ENCODE measurements at regions of chr9 and their contacts with region 1.

Region 1: DNA sequence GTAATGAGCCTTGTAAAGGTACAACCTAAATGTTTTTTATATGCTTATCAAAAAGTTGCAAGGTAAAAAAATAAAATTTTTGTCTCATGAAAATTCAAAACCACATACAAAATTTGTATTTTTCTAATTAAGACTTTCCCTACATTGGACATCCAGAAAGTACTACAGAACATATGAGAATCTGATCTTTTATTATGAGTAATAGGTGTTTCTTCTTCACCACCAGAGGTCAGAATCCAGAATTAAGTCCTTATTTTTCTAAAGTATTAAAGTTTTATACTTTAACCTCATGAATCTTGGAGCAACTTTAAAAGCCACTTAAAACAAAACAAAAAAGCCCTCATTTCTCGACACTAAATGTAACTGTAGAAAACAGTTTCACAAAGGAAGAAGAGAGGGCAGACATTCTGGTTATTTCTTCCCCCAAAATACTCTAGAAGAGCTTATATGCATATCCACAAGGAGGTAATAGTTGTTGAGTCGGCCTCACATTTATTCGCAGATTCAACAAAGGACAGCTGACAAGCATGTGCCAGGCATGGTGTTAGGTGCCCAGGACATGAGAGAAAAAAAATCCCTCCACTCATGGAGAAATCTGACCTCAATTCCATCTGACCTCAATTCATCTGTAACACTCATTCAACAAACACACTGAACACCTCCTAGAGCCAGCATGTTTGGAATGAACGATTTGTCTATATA is 69.3 kb downstream of the MLLT3 start:
- DNase-seq: no peak
- H3K4me3 Mint-ChIP-seq: peak overlapping the region; percentile 30
- H3K27ac Mint-ChIP-seq: peak overlapping the region; percentile 35
- H3K4me1 Mint-ChIP-seq: peaks cover 50% of the 10 kb centered on the region
- H3K27me3 Mint-ChIP-seq: no peaks in the 10 kb centered on the region
- CTCF ChIP-seq: no peak

Region 2: DNA sequence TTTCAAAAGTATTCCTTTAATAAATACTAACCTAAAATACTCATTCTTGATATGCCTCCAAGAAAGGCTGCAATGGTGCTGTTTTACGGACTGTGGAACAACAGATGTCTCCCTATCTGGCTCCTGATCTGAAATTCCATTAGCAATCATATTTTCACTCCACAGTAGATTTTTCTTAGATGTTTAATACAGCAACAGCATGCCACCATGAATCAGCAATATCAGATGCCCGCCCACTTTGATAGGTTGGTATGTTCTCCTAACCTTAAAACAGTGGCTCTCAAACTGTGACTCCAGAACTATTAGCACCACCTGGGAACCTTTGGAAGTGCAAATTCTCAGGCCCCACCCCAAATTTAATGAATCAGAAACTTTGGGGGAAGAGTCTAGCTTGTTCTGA is 40.9 kb before region 1 on chr9:
- CTCF ChIA-PET with region 1: no interaction called
- intact Hi-C with region 1: loop called (anchors 5 kb)
- DNase-seq: no peak
- H3K4me3 Mint-ChIP-seq: no peak overlapping the region
- H3K27ac Mint-ChIP-seq: peak overlapping the region; percentile 27
- H3K4me1 Mint-ChIP-seq: peaks cover 24% of the 10 kb centered on the region
- H3K27me3 Mint-ChIP-seq: no peaks in the 10 kb centered on the region
- CTCF ChIP-seq: no peak

Region 3: DNA sequence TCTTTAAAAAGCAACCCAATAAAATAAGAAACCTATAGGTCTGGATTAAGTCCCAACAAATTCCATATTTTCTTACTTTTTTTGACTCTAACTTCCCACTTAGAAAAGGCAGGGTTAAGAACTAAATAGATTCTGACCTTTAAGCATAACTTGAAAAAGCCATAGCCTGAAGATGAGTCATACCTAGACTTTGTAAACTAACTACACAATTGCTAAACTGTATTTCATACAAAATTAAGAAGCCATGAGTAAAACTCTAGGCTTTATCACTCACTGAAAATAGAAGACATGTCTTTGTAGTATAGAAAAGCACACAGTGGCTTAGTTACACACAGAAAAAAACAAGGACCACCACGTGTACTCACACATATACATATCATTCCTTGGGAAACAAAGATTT is 17.7 kb after region 1 on chr9:
- CTCF ChIA-PET with region 1: no interaction called
- intact Hi-C with region 1: loop called (anchors 1 kb)
- DNase-seq: no peak
- H3K4me3 Mint-ChIP-seq: no peak overlapping the region
- H3K27ac Mint-ChIP-seq: no peak overlapping the region
- H3K4me1 Mint-ChIP-seq: peaks cover 36% of the 10 kb centered on the region
- H3K27me3 Mint-ChIP-seq: no peaks in the 10 kb centered on the region
- CTCF ChIP-seq: no peak

Region 4: GRCh38 chr9:20611751-20612287 is 58.8 kb after region 1 on chr9:
- CTCF ChIA-PET with region 1: interaction called, 3 read pairs
- intact Hi-C with region 1: loop called (anchors 2 kb)
- DNase-seq: no peak
- H3K4me3 Mint-ChIP-seq: peak overlapping the region; percentile 59
- H3K27ac Mint-ChIP-seq: peak overlapping the region; percentile 89
- H3K4me1 Mint-ChIP-seq: peaks cover 43% of the 10 kb centered on the region
- H3K27me3 Mint-ChIP-seq: no peaks in the 10 kb centered on the region
- CTCF ChIP-seq: peak; percentile 33

Measured in Calu3 (cell line).